ENCODE measurements at regions of chr3 and their contacts with region 1.

Region 1: GRCh38 chr3:80643428-80643827 is 875.6 kb upstream of the ROBO1 start:
- DNase-seq: no peak
- ATAC-seq: no peak
- H3K4me3 ChIP-seq: no peak overlapping the region
- H3K27ac ChIP-seq: no peak overlapping the region
- H3K4me1 ChIP-seq: no peaks in the 10 kb centered on the region
- H3K27me3 ChIP-seq: no peaks in the 10 kb centered on the region
- CTCF ChIP-seq: no peak
- EP300 ChIP-seq: no peak
- POLR2A ChIP-seq: no peak
- RAD21 ChIP-seq: no peak

Region 2: GRCh38 chr3:80705290-80705689 is 61.9 kb after region 1 on chr3:
- CTCF ChIA-PET with region 1: no interaction called
- POLR2A ChIA-PET with region 1: no interaction called
- RAD21 ChIA-PET with region 1: no interaction called
- SMC1A ChIA-PET with region 1: no interaction called
- in situ Hi-C with region 1: no loop called
- intact Hi-C with region 1: loop called (anchors 10 kb)
- DNase-seq: no peak
- ATAC-seq: no peak
- H3K4me3 ChIP-seq: no peak overlapping the region
- H3K27ac ChIP-seq: no peak overlapping the region
- H3K4me1 ChIP-seq: no peaks in the 10 kb centered on the region
- H3K27me3 ChIP-seq: no peaks in the 10 kb centered on the region
- CTCF ChIP-seq: no peak
- EP300 ChIP-seq: no peak
- POLR2A ChIP-seq: no peak
- RAD21 ChIP-seq: no peak